ENCODE measurements at regions of chr14 and their contacts with region 1.

Region 1: DNA sequence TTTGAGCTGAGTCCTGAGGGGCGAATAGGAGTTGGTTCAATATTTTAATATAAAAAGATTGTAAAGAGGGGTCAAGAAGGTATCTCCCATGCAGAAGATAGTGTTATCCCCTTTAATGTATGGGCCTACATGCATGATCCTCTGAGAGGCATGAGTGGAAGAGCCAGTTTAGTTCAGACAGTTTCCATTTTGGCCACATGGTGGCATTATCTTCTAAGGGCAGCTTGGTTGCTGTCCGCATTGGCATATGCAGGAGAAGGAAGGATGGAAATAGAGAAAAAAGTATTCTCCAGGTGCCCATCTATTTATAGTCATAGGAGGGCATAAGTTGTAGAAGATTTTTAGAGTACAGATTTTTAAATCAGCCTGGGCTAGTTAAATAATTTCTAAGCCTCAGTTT is 5.4 kb downstream of the SAMD4A start:
- DNase-seq: peak; percentile 43
- H3K4me3 ChIP-seq: no peak overlapping the region
- H3K27ac ChIP-seq: no peak overlapping the region
- H3K4me1 ChIP-seq: peaks cover 33% of the 10 kb centered on the region
- H3K27me3 ChIP-seq: no peaks in the 10 kb centered on the region
- CTCF ChIP-seq: peak; percentile 61 to 66

Region 2: DNA sequence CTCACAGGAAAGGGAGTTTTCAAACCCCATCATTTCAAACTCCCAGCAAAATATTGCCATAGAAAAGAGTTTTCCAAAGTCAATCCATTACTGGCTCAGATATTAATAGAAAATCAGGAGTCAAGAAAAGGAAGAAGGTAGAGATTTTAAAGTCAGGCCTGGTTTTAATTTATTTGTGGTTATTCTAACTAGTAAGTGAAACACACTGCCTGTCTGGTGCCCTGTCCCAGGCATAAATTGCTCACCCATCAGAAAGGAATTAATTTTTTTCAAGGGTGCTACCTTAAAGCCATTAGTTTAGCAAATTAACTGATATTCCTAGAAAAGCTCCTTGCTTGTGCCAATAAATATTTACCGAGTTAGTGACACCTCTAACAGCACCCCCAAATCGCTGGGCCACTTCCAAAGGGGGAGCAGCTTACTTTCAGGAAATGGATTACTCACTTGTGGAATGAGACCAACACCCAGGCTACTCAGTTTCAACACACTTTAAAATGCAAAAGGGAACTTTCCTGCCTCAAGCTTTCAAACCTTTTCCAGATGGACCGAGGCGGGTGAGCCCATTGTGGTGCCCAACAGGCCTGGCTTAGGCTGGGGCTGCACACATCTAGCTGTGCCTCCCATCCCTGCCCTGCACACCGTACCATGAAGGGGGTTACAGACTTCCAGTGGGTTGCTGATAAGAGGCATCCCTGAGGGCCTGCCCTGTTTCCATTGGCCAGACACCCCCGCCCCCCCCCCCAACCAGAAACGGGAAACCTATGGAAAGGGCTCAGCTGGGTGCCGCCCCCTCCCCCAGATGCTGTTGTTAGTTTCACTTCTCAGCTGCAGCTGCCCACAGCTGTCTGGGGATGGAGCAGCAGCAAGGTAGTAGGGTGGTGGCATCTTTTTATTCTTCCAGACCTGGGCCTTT is 111.8 kb after region 1 on chr14:
- CTCF ChIA-PET with region 1: no interaction called
- dilution Hi-C with region 1: loop called (anchors 5 kb)
- in situ Hi-C with region 1: loop called (anchors 5 to 10 kb)
- intact Hi-C with region 1: no loop called
- DNase-seq: peak; percentile 84
- H3K4me3 ChIP-seq: no peak overlapping the region
- H3K27ac ChIP-seq: peak overlapping the region; percentile 73
- H3K4me1 ChIP-seq: peaks cover 63% of the 10 kb centered on the region
- H3K27me3 ChIP-seq: no peaks in the 10 kb centered on the region
- CTCF ChIP-seq: no peak